HCT116 (cell line): ENCODE measurements at regions of chr9 and their contacts with region 1.

Region 1: DNA sequence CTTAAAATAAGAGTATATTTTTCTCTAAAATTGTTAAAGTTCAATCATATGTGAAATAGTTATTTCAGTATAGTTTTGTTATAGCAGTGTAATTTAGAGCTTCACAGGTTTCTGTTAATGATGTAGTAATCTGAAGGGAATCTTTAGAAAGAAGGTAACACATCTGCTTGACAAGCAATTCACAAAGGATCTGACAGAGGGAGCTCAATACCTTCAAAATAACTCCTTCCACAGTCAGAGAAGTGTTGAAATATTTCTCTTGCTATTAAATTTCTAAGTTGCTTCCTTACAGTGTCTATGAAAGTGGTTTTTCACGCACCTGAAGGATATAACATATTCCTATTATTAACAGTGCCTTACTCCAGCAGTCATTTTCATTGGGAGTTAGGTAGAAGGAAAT is 44.9 kb downstream of the SLC25A51 start:
- DNase-seq: no peak
- ATAC-seq: no peak
- H3K4me3 ChIP-seq: no peak overlapping the region
- H3K27ac ChIP-seq: no peak overlapping the region
- H3K4me1 ChIP-seq: no peaks in the 10 kb centered on the region
- H3K27me3 ChIP-seq: no peaks in the 10 kb centered on the region
- CTCF ChIP-seq: peak; percentile 11 to 33 (median 14); a peak in 3 of 6 replicates
- POLR2A ChIP-seq: no peak
- RAD21 ChIP-seq: peak; percentile 40

Region 2: GRCh38 chr9:37753489-37754190 is 105.4 kb before region 1 on chr9 and contains the start of gene TRMT10B:
- CTCF ChIA-PET with region 1: no interaction called
- POLR2A ChIA-PET with region 1: no interaction called
- RAD21 ChIA-PET with region 1: no interaction called
- intact Hi-C with region 1: loop called (anchors 10 kb)
- DNase-seq: peak; percentile 39
- ATAC-seq: peak; percentile 91
- H3K4me3 ChIP-seq: peak within 1 kb of the TSS; percentile 79 to 85
- H3K27ac ChIP-seq: peak within 1 kb of the TSS; percentile 55
- H3K4me1 ChIP-seq: peaks cover 5 to 27% of the 10 kb centered on the region in 2 experiments; a peak in 3 of 4 replicates
- H3K27me3 ChIP-seq: no peaks in the 10 kb centered on the region
- CTCF ChIP-seq: no peak
- POLR2A ChIP-seq: no peak
- RAD21 ChIP-seq: no peak
- total RNA-seq, gene TRMT10B: 5.5 TPM

Region 3: DNA sequence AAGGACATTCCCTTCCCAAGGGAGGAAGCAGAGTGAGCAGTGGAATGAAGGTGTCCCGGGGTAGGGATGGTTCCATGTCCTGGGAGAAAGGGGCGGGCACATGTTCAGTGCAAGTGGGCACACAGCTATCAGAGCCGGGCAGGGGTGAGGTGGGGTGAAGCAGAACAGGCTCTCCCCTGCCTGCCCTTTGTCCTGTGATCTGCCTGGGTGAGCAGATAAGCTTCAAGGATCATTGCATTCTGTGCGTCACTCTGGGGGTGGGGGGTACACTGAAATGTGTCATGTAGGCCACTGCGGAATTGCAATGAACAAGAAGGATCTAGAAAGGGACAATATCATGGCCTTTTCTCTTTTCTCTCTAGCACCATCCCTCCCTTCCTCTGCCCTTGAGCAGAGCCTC is 271.7 kb after region 1 on chr9:
- CTCF ChIA-PET with region 1: no interaction called
- POLR2A ChIA-PET with region 1: no interaction called
- RAD21 ChIA-PET with region 1: no interaction called
- intact Hi-C with region 1: no loop called
- DNase-seq: no peak
- ATAC-seq: no peak
- H3K4me3 ChIP-seq: no peak overlapping the region
- H3K27ac ChIP-seq: no peak overlapping the region
- H3K4me1 ChIP-seq: no peaks in the 10 kb centered on the region
- H3K27me3 ChIP-seq: no peaks in the 10 kb centered on the region
- CTCF ChIP-seq: no peak
- POLR2A ChIP-seq: no peak
- RAD21 ChIP-seq: no peak